Esophagus squamous epithelium (tissue), 5 donors: ENCODE measurements at regions of chr4 and their contacts with region 1.

Region 1: GRCh38 chr4:24488399-24489164 is 95.8 kb downstream of the DHX15 start:
- DNase-seq: no peak
- H3K4me3 ChIP-seq: no peak overlapping the region
- H3K27ac ChIP-seq: no peak overlapping the region
- H3K4me1 ChIP-seq: peaks cover 0 to 5% (median 0%) of the 10 kb centered on the region in 3 donors
- H3K27me3 ChIP-seq: no peaks in the 10 kb centered on the region
- CTCF ChIP-seq: peak; percentile 63 to 82 (median 76)
- POLR2A ChIP-seq: no peak

Region 2: GRCh38 chr4:24686871-24687680 is 198.5 kb after region 1 on chr4:
- intact Hi-C with region 1: loop called (anchors 5 kb)
- DNase-seq: no peak
- H3K4me3 ChIP-seq: no peak overlapping the region
- H3K27ac ChIP-seq: peak overlapping the region in 1 of 4 donors; percentile 69
- H3K4me1 ChIP-seq: peaks cover 0 to 17% (median 0%) of the 10 kb centered on the region in 3 donors
- H3K27me3 ChIP-seq: no peaks in the 10 kb centered on the region
- CTCF ChIP-seq: peak in 5 of 6 experiments; percentile 17 to 60 (median 37)
- POLR2A ChIP-seq: no peak

Region 3: DNA sequence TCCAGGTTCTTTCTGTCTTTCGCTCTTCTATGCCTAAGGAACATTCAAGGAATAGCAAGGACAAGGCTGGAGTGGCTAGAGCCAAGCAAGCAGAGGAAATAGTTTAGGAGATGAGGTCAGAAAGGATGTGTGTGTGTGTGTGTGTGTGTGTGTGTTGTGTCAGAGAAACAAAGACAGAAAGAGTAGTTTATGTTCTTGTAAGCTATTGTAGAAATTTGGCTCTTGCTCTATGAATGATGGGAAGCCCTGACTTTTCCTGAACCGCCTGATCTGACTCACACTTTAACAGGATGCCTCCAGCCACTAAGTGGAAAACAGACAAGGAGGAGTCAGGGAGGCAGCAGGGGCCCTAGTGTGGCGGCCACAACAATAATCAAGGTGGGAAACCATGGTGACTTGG is 502.4 kb after region 1 on chr4:
- intact Hi-C with region 1: loop called (anchors 10 kb)
- DNase-seq: no peak
- H3K4me3 ChIP-seq: no peak overlapping the region
- H3K27ac ChIP-seq: peak overlapping the region in 2 of 4 donors; percentile 40 to 56
- H3K4me1 ChIP-seq: no peaks in the 10 kb centered on the region
- H3K27me3 ChIP-seq: no peaks in the 10 kb centered on the region
- CTCF ChIP-seq: no peak
- POLR2A ChIP-seq: no peak